OCI-LY7 (cell line): ENCODE measurements at regions of chr12 and their contacts with region 1.

Region 1: DNA sequence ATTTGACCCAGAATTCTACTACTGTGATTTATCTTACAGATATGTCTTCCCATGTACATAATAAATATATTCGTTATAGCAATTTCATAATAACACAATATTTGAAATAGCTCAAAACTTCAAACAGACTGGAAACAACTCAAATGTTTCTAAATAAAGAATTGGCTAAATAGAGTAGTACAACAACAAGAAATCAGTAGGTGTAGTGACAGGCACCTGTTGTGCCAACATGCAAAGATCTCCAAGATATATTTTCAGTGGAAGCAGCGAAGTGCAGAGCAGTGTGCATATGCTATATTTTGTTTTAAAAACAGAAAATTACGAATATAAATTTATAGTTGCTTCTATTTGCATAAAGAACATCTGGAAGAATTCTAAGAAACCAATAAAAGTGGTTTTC is 60.9 kb downstream of the GRIP1 start:
- DNase-seq: peak; percentile 71
- H3K4me3 ChIP-seq: peak overlapping the region; percentile 56
- H3K27ac ChIP-seq: peak overlapping the region; percentile 100
- H3K4me1 ChIP-seq: peaks cover 100% of the 10 kb centered on the region
- CTCF ChIP-seq: no peak

Region 2: DNA sequence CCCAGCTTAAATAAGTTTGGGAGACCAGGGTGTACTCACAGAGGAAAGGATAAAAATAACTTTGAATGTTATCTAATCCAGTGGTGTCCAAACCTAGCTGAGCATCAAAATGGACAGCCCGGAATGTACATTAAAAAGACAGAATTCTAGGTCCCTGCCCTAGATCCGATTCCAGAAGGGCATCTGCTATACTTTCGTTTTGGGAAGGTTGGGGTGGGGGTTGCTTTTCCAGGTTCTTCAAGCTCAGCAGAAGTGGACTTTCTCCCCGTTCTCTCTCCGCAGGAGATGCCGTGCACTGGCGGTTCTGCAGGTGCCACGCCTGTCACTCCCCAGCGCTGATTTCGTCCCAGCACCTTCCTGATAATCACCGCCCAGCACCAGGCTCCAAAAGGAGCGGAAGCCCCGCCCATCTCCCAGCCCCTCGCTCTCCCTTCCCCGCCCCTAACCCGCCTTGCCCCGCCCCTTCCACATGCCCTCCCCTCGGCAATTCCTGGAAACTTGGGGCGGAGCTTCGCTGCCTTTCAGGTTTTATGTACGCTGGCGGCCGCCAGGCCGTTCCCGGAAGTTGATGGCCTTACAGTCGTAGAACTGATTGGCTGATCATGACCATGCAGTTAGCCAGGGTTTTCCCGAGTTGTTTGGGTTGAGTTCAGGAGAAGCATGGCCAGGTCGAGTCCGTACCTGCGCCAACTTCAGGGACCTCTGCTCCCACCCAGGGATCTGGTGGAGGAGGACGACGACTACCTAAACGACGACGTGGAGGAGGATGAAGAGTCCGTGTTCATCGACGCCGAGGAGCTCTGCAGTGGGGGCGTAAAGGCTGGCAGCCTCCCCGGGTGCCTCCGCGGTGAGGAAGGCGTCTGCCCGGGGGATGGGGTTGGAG is 315.8 kb before region 1 on chr12 and contains the start of gene HELB:
- CTCF ChIA-PET with region 1: no interaction called
- POLR2A ChIA-PET with region 1: no interaction called
- intact Hi-C with region 1: loop called (anchors 5 kb)
- DNase-seq: peak; percentile 96
- H3K4me3 ChIP-seq: peak within 1 kb of the TSS; percentile 73
- H3K27ac ChIP-seq: peak within 1 kb of the TSS; percentile 16
- H3K4me1 ChIP-seq: peaks cover 31% of the 10 kb centered on the region
- CTCF ChIP-seq: no peak
- total RNA-seq, gene HELB: 3.8 and 6.0 TPM in 2 replicates

Region 3: GRCh38 chr12:66423266-66423665 is 194.7 kb before region 1 on chr12:
- CTCF ChIA-PET with region 1: no interaction called
- POLR2A ChIA-PET with region 1: no interaction called
- intact Hi-C with region 1: loop called (anchors 5 kb)
- DNase-seq: no peak
- H3K4me3 ChIP-seq: no peak overlapping the region
- H3K27ac ChIP-seq: no peak overlapping the region
- H3K4me1 ChIP-seq: no peaks in the 10 kb centered on the region
- CTCF ChIP-seq: no peak

Region 4: DNA sequence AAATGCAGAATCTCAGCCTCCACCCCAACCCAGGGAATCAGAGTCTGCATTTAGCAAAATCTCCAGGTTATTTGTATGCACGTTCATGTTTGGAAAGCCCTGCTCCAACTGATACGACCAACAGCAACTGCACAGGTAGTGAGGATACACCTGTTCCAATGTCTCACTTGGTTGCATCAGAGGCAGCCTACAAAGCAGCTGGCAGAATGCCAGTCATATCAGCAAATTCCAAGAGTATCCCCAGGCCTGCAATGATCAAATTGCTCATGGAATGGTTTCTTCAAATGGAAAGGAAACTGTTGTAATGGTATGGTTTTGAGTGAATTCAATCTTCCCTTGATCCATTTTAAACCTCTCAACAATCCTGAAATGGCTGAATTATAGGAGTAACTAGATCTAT is 14.5 kb before region 1 on chr12:
- CTCF ChIA-PET with region 1: interaction called, 3 read pairs
- POLR2A ChIA-PET with region 1: interaction called, 12 read pairs
- intact Hi-C with region 1: loop called (anchors 1 kb)
- DNase-seq: no peak
- H3K4me3 ChIP-seq: no peak overlapping the region
- H3K27ac ChIP-seq: no peak overlapping the region
- H3K4me1 ChIP-seq: peaks cover 57% of the 10 kb centered on the region
- CTCF ChIP-seq: no peak

Region 5: GRCh38 chr12:67472539-67472938 is 854.5 kb after region 1 on chr12:
- CTCF ChIA-PET with region 1: no interaction called
- POLR2A ChIA-PET with region 1: no interaction called
- intact Hi-C with region 1: no loop called
- DNase-seq: no peak
- H3K4me3 ChIP-seq: no peak overlapping the region
- H3K27ac ChIP-seq: no peak overlapping the region
- H3K4me1 ChIP-seq: no peaks in the 10 kb centered on the region
- CTCF ChIP-seq: no peak

Region 6: GRCh38 chr12:67991158-67991557 is 1373.2 kb after region 1 on chr12:
- CTCF ChIA-PET with region 1: no interaction called
- POLR2A ChIA-PET with region 1: interaction called, 3 read pairs
- intact Hi-C with region 1: loop called (anchors 5 kb)
- DNase-seq: peak; percentile 77
- H3K4me3 ChIP-seq: peak overlapping the region; percentile 78
- H3K27ac ChIP-seq: peak overlapping the region; percentile 97
- H3K4me1 ChIP-seq: peaks cover 63% of the 10 kb centered on the region
- CTCF ChIP-seq: no peak